Left lung (tissue), 14 donors: ENCODE measurements at regions of chr10 and their contacts with region 1.

Region 1: GRCh38 chr10:71396084-71396720 is 518 bp upstream of the CDH23 start:
- DNase-seq: peak in 3 of 4 donors; percentile 74 to 80 (median 75)
- ATAC-seq: peak; percentile 79
- H3K4me3 ChIP-seq: peak overlapping the region in 1 of 2 donors; percentile 41
- H3K27ac ChIP-seq: no peak overlapping the region
- H3K4me1 ChIP-seq: peaks cover 8 to 19% of the 10 kb centered on the region in 2 donors
- H3K27me3 ChIP-seq: peaks cover 27 to 79% of the 10 kb centered on the region in 2 donors
- CTCF ChIP-seq: peak; percentile 18 to 31

Region 2: GRCh38 chr10:71569775-71570588 is 173.8 kb after region 1 on chr10:
- intact Hi-C with region 1: loop called in 1 of 2 experiments (anchors 5 kb)
- DNase-seq: peak; percentile 35 to 67 (median 58)
- ATAC-seq: peak; percentile 81
- H3K4me3 ChIP-seq: no peak overlapping the region
- H3K27ac ChIP-seq: no peak overlapping the region
- H3K4me1 ChIP-seq: no peaks in the 10 kb centered on the region
- H3K27me3 ChIP-seq: no peaks in the 10 kb centered on the region
- CTCF ChIP-seq: peak; percentile 73 to 86

Region 3: DNA sequence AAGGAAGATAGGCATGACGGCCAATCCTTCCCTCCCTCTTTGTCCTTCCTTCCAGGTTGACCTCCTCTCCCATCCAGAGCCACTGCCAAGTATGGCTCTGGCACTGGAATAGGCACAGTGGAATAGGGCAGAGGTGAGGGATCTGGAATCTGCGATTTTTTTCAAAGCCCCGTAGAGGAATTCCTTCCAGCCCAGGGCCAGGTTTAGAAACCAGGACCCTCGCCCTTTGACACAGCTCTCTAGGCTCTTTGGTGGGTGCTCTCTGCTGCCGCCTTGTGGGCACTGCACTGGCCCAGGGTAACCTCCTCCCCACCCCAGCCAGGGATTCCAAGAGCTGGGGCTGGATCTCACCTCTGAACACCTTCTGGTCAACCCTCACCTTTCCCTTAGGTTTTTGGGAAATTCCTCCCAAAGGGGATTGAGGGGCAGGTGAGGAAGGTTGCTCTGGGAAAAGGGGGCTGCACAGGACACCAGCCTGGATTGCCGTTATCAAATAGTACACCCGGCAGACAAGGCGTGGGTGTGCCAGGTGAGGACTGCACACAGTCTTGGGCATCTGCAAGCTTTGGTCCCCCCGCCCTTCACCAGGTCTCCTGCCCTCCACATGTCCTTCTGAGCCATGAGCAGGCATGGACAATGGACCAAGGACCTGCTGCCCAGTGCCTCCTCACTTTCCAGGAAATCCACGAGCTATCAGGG is 300.6 kb after region 1 on chr10:
- intact Hi-C with region 1: loop called in 1 of 2 experiments (anchors 10 kb)
- DNase-seq: peak in 3 of 4 donors; percentile 40 to 91 (median 54)
- ATAC-seq: peak; percentile 76
- H3K4me3 ChIP-seq: no peak overlapping the region
- H3K27ac ChIP-seq: no peak overlapping the region
- H3K4me1 ChIP-seq: peaks cover 4 to 71% of the 10 kb centered on the region in 2 donors
- H3K27me3 ChIP-seq: no peaks in the 10 kb centered on the region
- CTCF ChIP-seq: peak; percentile 84 to 86